ENCODE measurements at regions of chr1 and their contacts with region 1.

Region 1: DNA sequence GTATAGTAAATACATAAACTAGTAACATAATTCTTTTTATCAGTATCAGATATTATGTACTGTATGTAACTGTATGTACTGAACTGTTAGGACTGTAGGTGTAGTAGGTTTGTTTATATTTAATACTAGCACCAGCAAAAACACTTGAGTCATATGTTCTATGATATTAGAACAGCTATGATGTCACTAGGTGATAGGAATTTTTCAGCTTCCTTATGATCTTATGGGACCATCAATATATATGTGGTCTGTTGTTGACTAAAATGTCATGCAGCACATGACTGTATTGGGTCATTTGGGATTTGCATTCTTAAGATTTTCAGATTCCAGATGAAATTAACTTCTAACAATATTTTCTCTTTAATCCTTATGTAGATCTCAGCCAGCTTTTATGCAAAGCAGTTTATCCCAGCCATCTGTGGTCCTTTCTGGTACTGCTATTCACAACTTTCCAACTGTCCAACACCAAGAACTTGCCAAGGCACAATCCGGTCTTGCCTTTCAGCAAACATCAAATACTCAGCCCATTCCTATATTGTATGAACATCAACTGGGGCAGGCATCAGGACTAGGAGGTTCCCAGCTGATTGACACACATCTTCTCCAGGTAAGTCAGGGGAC is 38.4 kb upstream of the MYOCOS start:
- DNase-seq: no peak
- ATAC-seq: no peak
- H3K4me3 ChIP-seq: no peak overlapping the region
- H3K27ac ChIP-seq: no peak overlapping the region
- H3K4me1 ChIP-seq: no peaks in the 10 kb centered on the region
- H3K27me3 ChIP-seq: no peaks in the 10 kb centered on the region
- CTCF ChIP-seq: no peak
- POLR2A ChIP-seq: no peak
- RAD21 ChIP-seq: no peak

Region 2: GRCh38 chr1:171530676-171531075 is 53.0 kb before region 1 on chr1:
- CTCF ChIA-PET with region 1: no interaction called
- POLR2A ChIA-PET with region 1: no interaction called
- RAD21 ChIA-PET with region 1: no interaction called
- intact Hi-C with region 1: loop called (anchors 10 kb)
- DNase-seq: no peak
- ATAC-seq: no peak
- H3K4me3 ChIP-seq: no peak overlapping the region
- H3K27ac ChIP-seq: no peak overlapping the region
- H3K4me1 ChIP-seq: no peaks in the 10 kb centered on the region
- H3K27me3 ChIP-seq: no peaks in the 10 kb centered on the region
- CTCF ChIP-seq: no peak
- POLR2A ChIP-seq: no peak
- RAD21 ChIP-seq: no peak